ENCODE measurements at regions of chr6 and their contacts with region 1.

Region 1: DNA sequence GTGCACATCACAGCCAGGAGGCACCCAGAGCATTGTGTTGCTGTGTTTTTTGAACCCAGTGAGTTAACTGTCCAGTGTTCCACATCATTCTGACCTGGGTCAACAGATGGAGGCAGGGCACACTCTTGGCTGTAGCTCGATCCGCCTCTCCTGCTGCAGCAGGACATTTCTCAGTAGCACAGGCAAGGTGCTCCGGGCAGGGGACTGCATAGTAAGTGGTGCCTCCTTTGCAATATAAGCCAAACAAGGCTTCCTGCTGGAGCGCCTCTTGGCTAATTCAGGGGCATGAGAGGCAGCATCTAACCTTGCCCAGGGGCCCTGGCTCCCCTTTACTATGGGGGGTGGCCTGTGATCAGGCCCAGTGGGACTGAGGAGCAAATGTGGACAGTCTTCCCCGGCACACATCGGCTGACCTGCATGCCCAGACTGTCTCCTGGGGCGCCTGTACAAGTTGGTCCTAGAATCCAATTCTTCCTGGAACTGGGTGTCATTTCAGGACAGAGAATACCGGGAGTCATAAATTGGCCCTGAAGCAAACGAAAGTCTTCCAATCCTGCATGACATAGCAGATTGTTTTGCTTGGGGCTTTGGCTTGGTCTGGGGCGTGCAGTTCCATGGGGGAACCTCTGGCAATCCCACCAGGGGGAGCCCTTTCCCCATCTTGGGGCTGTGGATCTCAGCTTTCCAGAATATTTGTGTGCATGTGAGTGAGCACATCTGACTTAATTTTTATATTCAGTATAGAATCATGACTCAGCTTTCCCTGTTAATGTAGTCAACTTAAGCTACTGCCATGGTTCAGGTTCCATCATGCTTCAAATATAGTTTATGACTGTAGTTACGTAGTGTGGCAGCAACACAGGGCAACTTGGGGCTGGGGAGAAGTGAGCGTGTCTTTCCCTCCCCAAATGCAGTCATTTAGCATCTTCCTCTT is 56.0 kb upstream of the DDR1 start:
- DNase-seq: peak; percentile 81 to 92 (median 86)
- ATAC-seq: peak; percentile 93 to 98 (median 96)
- H3K4me3 ChIP-seq: no peak overlapping the region
- H3K27ac ChIP-seq: peak overlapping the region in 2 of 4 donors; percentile 29 to 72
- H3K4me1 ChIP-seq: peaks cover 0 to 6% (median 0%) of the 10 kb centered on the region in 3 donors
- H3K27me3 ChIP-seq: no peaks in the 10 kb centered on the region
- CTCF ChIP-seq: peak; percentile 87 to 93 (median 89)

Region 2: GRCh38 chr6:30862156-30862875 is 34.0 kb after region 1 on chr6:
- intact Hi-C with region 1: loop called in 1 of 3 experiments (anchors 5 kb)
- DNase-seq: no peak
- ATAC-seq: no peak
- H3K4me3 ChIP-seq: no peak overlapping the region
- H3K27ac ChIP-seq: no peak overlapping the region
- H3K4me1 ChIP-seq: no peaks in the 10 kb centered on the region
- H3K27me3 ChIP-seq: no peaks in the 10 kb centered on the region
- CTCF ChIP-seq: no peak

Region 3: DNA sequence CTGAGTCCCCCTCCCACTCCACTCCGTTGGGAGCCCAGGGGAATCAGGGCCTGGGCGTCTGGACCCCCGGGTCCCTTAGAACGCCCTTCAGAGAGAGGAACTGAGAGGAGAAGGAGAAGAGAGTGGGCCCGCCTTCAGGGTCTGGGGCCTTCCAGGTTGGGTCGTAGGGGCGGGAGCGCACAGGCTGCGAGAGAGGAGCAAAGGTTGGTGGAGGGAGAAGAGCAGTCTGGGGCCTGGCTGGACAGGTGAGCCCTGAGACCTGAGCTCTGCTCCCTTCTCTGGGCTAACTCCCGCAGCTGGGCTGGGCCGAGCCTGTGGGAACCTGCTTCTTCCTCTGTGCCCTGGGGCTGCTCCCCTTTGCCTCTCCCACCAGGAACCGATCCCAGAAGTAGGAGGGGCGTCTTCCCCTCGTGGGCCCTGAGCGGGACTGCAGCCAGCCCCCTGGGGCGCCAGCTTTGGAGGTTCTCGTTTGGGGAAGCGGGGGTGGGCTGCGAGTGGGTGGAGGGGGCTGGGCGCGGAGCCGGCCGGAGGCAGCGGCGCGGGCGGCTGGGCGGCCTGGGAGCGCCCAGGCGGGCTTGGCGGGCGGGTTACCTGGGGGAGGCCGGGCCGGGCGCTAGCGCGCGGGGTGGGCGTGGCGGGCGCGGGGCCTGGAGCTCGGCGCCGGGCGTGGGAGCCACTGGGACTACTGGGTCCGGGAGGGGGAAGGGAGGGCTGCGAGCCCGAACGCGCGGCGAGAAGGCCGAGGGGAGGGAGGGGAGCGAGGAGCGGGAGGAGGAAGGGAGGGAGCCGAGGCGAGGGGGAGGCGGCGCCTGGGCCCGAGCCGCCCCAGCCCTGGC is 55.6 kb after region 1 on chr6 and contains the start of gene DDR1:
- intact Hi-C with region 1: loop called in 1 of 3 experiments (anchors 5 kb)
- DNase-seq: peak; percentile 75 to 91 (median 88)
- ATAC-seq: peak; percentile 61 to 69 (median 64)
- H3K4me3 ChIP-seq: peak within 1 kb of the TSS; percentile 69 to 75 (median 73)
- H3K27ac ChIP-seq: peak within 1 kb of the TSS; percentile 79 to 96 (median 89)
- H3K4me1 ChIP-seq: peaks cover 15 to 27% (median 20%) of the 10 kb centered on the region in 3 donors
- H3K27me3 ChIP-seq: no peaks in the 10 kb centered on the region
- CTCF ChIP-seq: no peak
- total RNA-seq, gene DDR1: 92.7 to 160 (median 118) TPM

Region 4: DNA sequence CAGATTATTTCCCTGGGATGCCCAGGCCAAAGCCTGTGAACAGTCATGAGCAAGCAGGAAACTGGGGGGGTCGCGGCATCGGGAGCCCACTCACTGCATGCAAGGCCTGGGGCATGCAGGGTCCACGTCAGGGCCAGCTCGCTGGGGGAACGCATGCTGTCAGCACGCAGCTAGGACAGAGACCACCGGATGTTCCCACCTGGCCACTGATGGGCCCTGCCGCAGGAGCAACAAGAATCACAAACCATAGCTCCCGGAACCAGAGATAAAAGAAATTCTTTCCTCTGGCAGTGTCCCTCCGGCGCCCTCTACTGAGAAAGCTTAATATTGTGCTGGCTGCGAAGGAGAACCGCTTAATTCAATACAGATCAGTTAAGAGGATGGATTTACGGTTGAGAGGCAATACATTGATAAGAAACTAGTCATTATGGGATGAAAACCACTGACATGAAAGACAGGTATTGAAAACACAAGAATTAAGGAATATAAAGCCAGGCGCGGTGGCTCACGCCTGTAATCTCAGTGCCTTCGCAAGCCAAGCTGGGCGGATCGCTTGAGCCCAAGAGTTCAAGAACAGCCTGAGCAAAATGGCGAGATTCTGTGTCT is 251.5 kb after region 1 on chr6:
- intact Hi-C with region 1: loop called in 2 of 3 experiments (anchors 5 to 10 kb)
- DNase-seq: peak; percentile 39 to 75 (median 58)
- ATAC-seq: peak; percentile 71 to 96 (median 92)
- H3K4me3 ChIP-seq: no peak overlapping the region
- H3K27ac ChIP-seq: no peak overlapping the region
- H3K4me1 ChIP-seq: no peaks in the 10 kb centered on the region
- H3K27me3 ChIP-seq: no peaks in the 10 kb centered on the region
- CTCF ChIP-seq: peak; percentile 29 to 72 (median 60)

Region 5: GRCh38 chr6:31087494-31088089 is 259.3 kb after region 1 on chr6:
- intact Hi-C with region 1: loop called in 2 of 3 experiments (anchors 5 to 10 kb)
- DNase-seq: peak; percentile 64 to 94 (median 82)
- ATAC-seq: peak; percentile 97 to 99 (median 98)
- H3K4me3 ChIP-seq: no peak overlapping the region
- H3K27ac ChIP-seq: no peak overlapping the region
- H3K4me1 ChIP-seq: no peaks in the 10 kb centered on the region
- H3K27me3 ChIP-seq: no peaks in the 10 kb centered on the region
- CTCF ChIP-seq: peak; percentile 61 to 76 (median 74)